ENCODE measurements at regions of chr4 and their contacts with region 1.

Region 1: DNA sequence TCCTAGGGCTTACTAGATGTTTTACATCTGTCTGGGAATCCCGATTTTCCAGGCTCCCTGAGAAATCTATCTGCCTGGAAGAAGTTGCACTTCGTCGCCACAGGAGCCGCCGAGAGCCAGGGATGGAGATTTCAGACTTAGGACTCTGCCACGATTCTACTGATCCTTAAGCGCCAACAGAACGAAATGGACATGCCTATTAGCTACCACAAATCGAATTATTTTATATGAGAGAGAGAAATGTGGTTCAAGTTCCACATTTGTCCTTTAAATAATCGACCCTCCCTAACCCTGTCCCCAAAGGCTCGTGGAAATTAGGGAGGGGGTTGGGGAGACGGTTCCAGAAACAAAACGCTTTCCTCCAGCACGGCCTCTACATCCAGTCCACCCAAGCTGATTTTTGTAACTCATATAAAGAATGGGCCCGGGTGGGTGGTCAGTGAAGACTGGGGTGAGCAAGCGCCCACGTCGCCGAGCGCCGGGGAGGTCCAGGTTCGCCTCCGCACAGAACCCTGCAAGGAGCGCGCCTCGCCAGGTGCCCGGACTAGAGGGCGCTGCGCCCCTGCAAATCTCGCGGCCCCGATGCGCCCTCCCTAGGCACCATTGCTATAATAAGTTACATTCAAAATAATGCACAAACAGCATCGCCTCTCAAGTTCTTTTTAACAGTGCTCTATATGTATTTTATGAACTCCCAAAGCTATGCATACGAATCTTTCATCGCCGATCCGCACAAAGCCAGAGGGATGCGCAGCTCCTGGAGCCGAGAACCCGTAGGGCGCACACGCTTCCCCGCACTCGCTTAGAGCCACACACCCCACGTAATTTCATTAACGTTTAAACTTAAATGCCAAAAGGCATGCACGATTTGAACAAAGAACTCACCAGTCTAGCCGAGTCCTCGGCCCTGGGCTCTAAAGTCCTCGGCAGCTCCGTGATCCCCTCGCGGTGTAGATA is 2.1 kb upstream of the FAT1 start:
- DNase-seq: peak; percentile 51
- ATAC-seq: peak; percentile 71
- H3K4me3 ChIP-seq: peak overlapping the region; percentile 88 to 93
- H3K27ac ChIP-seq: peak overlapping the region; percentile 90
- H3K4me1 ChIP-seq: peaks cover 18% of the 10 kb centered on the region
- H3K27me3 ChIP-seq: no peaks in the 10 kb centered on the region
- CTCF ChIP-seq: peak; percentile 88

Region 2: DNA sequence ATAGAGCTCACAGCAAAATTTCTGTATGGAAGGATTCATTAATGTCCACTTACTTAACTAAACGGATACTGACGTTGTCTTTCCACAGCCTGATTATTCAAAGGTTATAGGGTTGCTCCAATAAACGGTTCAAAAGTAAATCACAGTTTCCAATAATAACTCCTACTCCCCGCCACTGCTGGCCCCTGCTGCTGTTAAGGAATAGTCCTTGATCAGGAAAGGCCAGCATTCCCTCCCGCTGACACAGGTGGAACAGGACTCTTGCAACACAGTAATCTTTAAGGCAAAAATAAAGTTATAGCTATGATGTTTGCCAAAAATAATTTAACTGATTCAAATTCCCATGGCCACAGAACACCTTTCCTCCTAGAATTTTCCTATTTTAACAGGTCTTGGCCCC is 56.0 kb before region 1 on chr4:
- CTCF ChIA-PET with region 1: no interaction called
- POLR2A ChIA-PET with region 1: interaction called, 3 read pairs
- in situ Hi-C with region 1: no loop called
- intact Hi-C with region 1: loop called (anchors 5 kb)
- DNase-seq: no peak
- ATAC-seq: 0 out of 2 replicates have a peak, but pooled peaks have one; percentile 41
- H3K4me3 ChIP-seq: no peak overlapping the region
- H3K27ac ChIP-seq: peak overlapping the region; percentile 92
- H3K4me1 ChIP-seq: peaks cover 62% of the 10 kb centered on the region
- H3K27me3 ChIP-seq: no peaks in the 10 kb centered on the region
- CTCF ChIP-seq: peak; percentile 23; the same call in 1 of the 2 replicates

Region 3: GRCh38 chr4:186701273-186701672 is 24.5 kb before region 1 on chr4:
- CTCF ChIA-PET with region 1: no interaction called
- POLR2A ChIA-PET with region 1: interaction called, 10 read pairs
- in situ Hi-C with region 1: no loop called
- intact Hi-C with region 1: no loop called
- DNase-seq: no peak
- ATAC-seq: peak; percentile 23
- H3K4me3 ChIP-seq: peak overlapping the region in 1 of 2 experiments; percentile 25; a peak in 2 of 4 replicates
- H3K27ac ChIP-seq: peak overlapping the region; percentile 98
- H3K4me1 ChIP-seq: peaks cover 91% of the 10 kb centered on the region
- H3K27me3 ChIP-seq: no peaks in the 10 kb centered on the region
- CTCF ChIP-seq: no peak

Region 4: GRCh38 chr4:186839122-186840037 is 113.6 kb after region 1 on chr4:
- CTCF ChIA-PET with region 1: no interaction called
- POLR2A ChIA-PET with region 1: no interaction called
- in situ Hi-C with region 1: no loop called
- intact Hi-C with region 1: loop called (anchors 5 kb)
- DNase-seq: no peak
- ATAC-seq: peak; percentile 33; the same call in 1 of the 2 replicates
- H3K4me3 ChIP-seq: peak overlapping the region; percentile 59 to 90
- H3K27ac ChIP-seq: peak overlapping the region; percentile 91
- H3K4me1 ChIP-seq: peaks cover 19% of the 10 kb centered on the region
- H3K27me3 ChIP-seq: no peaks in the 10 kb centered on the region
- CTCF ChIP-seq: no peak

Region 5: DNA sequence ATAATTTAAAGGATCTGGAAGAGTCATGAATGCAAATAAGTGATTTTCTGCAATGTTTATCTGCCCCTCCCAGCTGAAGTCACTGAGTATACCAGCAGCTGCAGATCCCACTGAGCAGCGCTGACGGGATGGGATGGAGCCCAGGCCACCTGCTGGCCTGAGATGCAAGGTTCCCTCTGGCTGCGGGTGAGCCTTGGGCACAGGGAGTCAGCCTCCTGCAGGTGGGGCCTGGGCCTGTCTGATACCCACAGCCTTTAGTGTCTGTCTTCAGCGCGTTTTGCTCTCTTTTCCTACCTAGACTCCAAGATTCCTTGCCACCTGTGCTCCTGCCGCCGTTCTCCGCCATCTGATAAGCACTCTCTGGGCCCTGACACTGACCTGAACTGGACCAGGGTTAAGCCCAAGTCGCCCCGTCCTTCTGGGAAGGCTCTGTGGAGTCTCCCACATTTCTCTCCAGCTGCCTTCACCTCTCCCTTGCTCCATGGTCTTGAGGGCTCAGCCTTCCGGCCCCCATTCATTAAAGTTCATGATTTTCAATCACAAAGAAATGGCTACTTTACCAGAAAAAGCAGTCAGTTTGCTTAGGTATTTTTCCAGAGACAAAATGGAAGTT is 221.0 kb after region 1 on chr4:
- CTCF ChIA-PET with region 1: no interaction called
- POLR2A ChIA-PET with region 1: no interaction called
- in situ Hi-C with region 1: no loop called
- intact Hi-C with region 1: loop called (anchors 10 kb)
- DNase-seq: no peak
- ATAC-seq: peak; percentile 96
- H3K4me3 ChIP-seq: no peak overlapping the region
- H3K27ac ChIP-seq: peak overlapping the region; percentile 8; the same call in 1 of the 2 replicates
- H3K4me1 ChIP-seq: peaks cover 17% of the 10 kb centered on the region
- H3K27me3 ChIP-seq: no peaks in the 10 kb centered on the region
- CTCF ChIP-seq: peak; percentile 74